Heart right ventricle (tissue), 16 donors: ENCODE measurements at regions of chr1 and their contacts with region 1.

Region 1: DNA sequence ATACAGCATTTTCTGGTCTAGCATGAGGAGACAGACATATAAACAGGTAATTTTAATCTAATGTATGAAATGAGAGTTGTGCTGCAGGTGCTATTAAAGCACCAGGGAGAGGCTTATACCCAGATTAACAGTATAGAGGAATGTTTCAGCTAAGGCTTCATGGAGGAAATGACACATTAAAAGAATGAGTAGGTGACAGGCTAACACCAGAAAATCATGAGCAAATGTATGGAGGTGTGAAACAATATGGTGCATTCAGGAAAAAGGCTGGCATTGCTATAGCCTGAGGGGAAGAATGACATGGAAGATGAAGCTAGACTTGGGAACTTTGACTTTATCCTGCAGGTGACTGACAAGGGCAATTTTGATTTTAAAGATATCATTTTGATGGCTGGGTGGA is 7.0 kb downstream of the ARPC5 start:
- DNase-seq: no peak
- ATAC-seq: no peak
- H3K4me3 ChIP-seq: no peak overlapping the region
- H3K27ac ChIP-seq: peak overlapping the region in 1 of 10 donors; percentile 19
- H3K4me1 ChIP-seq: peaks cover 3 to 82% (median 62%) of the 10 kb centered on the region in 9 donors
- H3K27me3 ChIP-seq: no peaks in the 10 kb centered on the region
- CTCF ChIP-seq: no peak

Region 2: GRCh38 chr1:183477986-183478781 is 150.4 kb before region 1 on chr1:
- intact Hi-C with region 1: loop called in 8 of 10 experiments (anchors 5 to 10 kb)
- DNase-seq: no peak
- ATAC-seq: no peak
- H3K4me3 ChIP-seq: no peak overlapping the region
- H3K27ac ChIP-seq: peak overlapping the region in 2 of 10 donors; percentile 12 to 34
- H3K4me1 ChIP-seq: peaks cover 0 to 96% (median 81%) of the 10 kb centered on the region in 9 donors
- H3K27me3 ChIP-seq: no peaks in the 10 kb centered on the region
- CTCF ChIP-seq: no peak